CD8-positive, alpha-beta T cell (primary cell): ENCODE measurements at regions of chr19 and their contacts with region 1.

Region 1: DNA sequence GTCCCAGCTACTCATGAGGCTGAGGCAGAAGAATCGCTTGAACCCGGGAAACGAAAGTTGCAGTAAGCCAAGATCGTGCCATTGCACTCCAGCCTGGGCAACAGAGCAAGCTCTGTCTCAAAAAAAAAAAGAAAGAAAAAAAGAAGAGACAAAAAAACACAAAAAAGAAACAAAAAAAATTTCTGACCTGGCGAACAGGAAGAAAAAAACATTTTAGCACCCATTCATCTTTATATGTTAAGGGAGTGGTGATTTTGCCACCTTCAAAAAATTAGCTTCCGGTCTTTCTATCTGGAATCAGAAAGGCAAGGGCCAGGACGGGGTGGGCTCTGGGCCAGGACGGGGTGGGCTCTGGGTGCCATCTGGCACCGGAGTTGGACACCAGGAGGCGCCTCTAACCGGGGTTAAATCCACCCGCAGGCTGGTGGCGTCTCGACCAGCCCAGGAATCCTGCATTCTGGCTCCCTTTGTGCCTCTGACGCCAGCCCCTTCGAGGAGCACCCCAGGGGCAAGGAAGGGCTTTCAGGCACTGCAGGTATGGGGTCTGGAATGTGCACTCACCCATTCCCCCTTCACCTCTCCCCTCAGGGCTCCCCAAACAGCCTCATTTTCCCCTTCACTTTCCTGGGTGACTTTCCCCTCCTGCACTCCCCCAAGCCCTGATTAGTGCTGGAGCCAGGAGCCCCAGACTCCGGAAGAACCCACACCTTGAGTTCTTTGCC is 10.4 kb upstream of the ZSWIM4 start:
- DNase-seq: peak; percentile 44 to 86 (median 78)
- ATAC-seq: peak; percentile 65
- H3K4me3 ChIP-seq: no peak overlapping the region
- H3K4me3 Mint-ChIP-seq: peak overlapping the region; percentile 45
- H3K27ac ChIP-seq: no peak overlapping the region
- H3K27ac Mint-ChIP-seq: peak overlapping the region; percentile 63
- H3K4me1 ChIP-seq: peaks cover 35% of the 10 kb centered on the region
- H3K4me1 Mint-ChIP-seq: peaks cover 31% of the 10 kb centered on the region
- H3K27me3 ChIP-seq: no peaks in the 10 kb centered on the region
- H3K27me3 Mint-ChIP-seq: no peaks in the 10 kb centered on the region
- CTCF ChIP-seq: peak; percentile 73

Region 2: DNA sequence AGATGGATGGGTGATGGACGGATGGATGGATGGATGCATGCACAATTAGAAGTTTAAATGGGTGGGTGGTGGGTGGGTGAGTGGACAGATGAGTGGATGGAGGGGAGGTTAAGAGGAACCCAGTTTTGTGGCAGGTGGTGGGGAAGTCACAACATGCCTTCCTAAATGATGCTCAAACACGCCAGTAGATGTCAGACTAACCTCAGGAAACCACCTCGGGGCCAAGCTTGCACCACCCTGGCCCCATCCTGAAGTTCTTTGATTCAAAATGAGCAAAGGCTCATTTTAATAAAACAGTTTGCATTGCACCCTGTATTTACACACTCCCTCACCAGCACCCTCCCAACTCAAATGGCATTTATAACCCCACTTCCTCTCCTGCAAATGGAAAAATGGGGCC is 187.3 kb before region 1 on chr19:
- CTCF ChIA-PET with region 1: interaction called, 3 read pairs
- POLR2A ChIA-PET with region 1: no interaction called
- intact Hi-C with region 1: loop called (anchors 5 kb)
- DNase-seq: peak in 8 of 9 experiments; percentile 9 to 75 (median 34)
- ATAC-seq: peak; percentile 76
- H3K4me3 ChIP-seq: no peak overlapping the region
- H3K4me3 Mint-ChIP-seq: no peak overlapping the region
- H3K27ac ChIP-seq: no peak overlapping the region
- H3K27ac Mint-ChIP-seq: no peak overlapping the region
- H3K4me1 ChIP-seq: no peaks in the 10 kb centered on the region
- H3K4me1 Mint-ChIP-seq: no peaks in the 10 kb centered on the region
- H3K27me3 ChIP-seq: no peaks in the 10 kb centered on the region
- H3K27me3 Mint-ChIP-seq: peaks cover 24% of the 10 kb centered on the region
- CTCF ChIP-seq: peak; percentile 44

Region 3: GRCh38 chr19:13794757-13795589 is 10.1 kb after region 1 on chr19 and contains the start of gene ZSWIM4:
- CTCF ChIA-PET with region 1: interaction called, 7 read pairs
- POLR2A ChIA-PET with region 1: interaction called, 6 read pairs
- intact Hi-C with region 1: loop called in 1 of 2 experiments (anchors 1 kb)
- DNase-seq: peak; percentile 83 to 96 (median 91)
- ATAC-seq: peak; percentile 85
- H3K4me3 ChIP-seq: peak within 1 kb of the TSS; percentile 73 to 80
- H3K4me3 Mint-ChIP-seq: peak within 1 kb of the TSS; percentile 92
- H3K27ac ChIP-seq: peak within 1 kb of the TSS; percentile 51 to 77
- H3K27ac Mint-ChIP-seq: peak within 1 kb of the TSS; percentile 89
- H3K4me1 ChIP-seq: peaks cover 27% of the 10 kb centered on the region
- H3K4me1 Mint-ChIP-seq: peaks cover 38% of the 10 kb centered on the region
- H3K27me3 ChIP-seq: no peaks in the 10 kb centered on the region
- H3K27me3 Mint-ChIP-seq: no peaks in the 10 kb centered on the region
- CTCF ChIP-seq: no peak
- total RNA-seq, gene ZSWIM4: 4.1 to 5.0 TPM

Region 4: GRCh38 chr19:13806728-13807127 is 21.8 kb after region 1 on chr19:
- CTCF ChIA-PET with region 1: no interaction called
- POLR2A ChIA-PET with region 1: no interaction called
- intact Hi-C with region 1: no loop called
- DNase-seq: no peak
- ATAC-seq: no peak
- H3K4me3 ChIP-seq: no peak overlapping the region
- H3K4me3 Mint-ChIP-seq: no peak overlapping the region
- H3K27ac ChIP-seq: no peak overlapping the region
- H3K27ac Mint-ChIP-seq: no peak overlapping the region
- H3K4me1 ChIP-seq: no peaks in the 10 kb centered on the region
- H3K4me1 Mint-ChIP-seq: no peaks in the 10 kb centered on the region
- H3K27me3 ChIP-seq: no peaks in the 10 kb centered on the region
- H3K27me3 Mint-ChIP-seq: no peaks in the 10 kb centered on the region
- CTCF ChIP-seq: no peak

Region 5: DNA sequence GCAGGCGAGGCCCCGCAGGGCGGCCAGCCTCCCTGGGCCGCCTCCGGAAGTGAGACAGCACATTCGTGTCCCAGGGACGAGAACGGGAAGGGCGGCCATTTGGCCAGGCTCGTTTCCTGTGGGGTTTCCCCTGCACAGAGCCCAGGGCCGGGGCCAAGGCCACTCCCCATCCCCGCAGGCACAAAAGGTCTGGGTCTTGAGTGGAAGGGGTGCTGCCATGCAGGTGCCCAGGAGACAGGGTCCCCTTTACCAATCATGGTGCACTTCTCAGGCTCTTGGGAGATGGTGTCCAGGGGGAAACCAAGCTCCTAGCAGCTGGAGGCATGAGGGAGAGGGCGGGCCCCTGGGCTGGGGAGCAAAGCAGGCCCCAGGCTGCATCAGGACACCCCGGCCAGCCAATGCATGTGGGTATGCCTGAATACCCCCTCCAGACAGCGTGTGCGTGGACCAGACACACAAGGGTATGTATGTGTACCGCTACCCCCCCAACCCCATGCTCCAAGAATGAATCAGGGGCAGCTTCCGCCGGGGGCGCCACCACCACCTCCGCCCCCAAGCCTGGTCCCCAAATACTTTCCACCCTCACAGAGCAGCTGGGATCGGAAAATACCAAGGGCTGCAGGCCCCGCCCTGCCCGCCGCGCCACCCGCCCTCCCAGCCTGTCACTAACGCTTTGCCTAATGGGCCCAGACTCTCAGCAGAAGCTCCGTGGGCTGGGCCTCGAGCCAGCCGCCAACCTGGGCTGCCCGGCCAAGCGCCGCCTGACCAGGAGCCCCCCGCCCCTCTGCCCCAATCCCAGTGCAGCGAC is 54.4 kb after region 1 on chr19:
- CTCF ChIA-PET with region 1: interaction called, 15 read pairs
- POLR2A ChIA-PET with region 1: interaction called, 6 read pairs
- intact Hi-C with region 1: loop called in 1 of 2 experiments (anchors 1 kb)
- DNase-seq: peak in 8 of 9 experiments; percentile 64 to 89 (median 80)
- ATAC-seq: peak; percentile 45
- H3K4me3 ChIP-seq: peak overlapping the region; percentile 62 to 67
- H3K4me3 Mint-ChIP-seq: peak overlapping the region; percentile 88
- H3K27ac ChIP-seq: peak overlapping the region; percentile 78 to 96
- H3K27ac Mint-ChIP-seq: peak overlapping the region; percentile 95
- H3K4me1 ChIP-seq: peaks cover 82% of the 10 kb centered on the region
- H3K4me1 Mint-ChIP-seq: peaks cover 69% of the 10 kb centered on the region
- H3K27me3 ChIP-seq: no peaks in the 10 kb centered on the region
- H3K27me3 Mint-ChIP-seq: no peaks in the 10 kb centered on the region
- CTCF ChIP-seq: no peak

Region 6: GRCh38 chr19:14073261-14073924 is 288.5 kb after region 1 on chr19:
- CTCF ChIA-PET with region 1: interaction called, 3 read pairs
- POLR2A ChIA-PET with region 1: no interaction called
- intact Hi-C with region 1: loop called (anchors 1 to 5 kb)
- DNase-seq: peak; percentile 55 to 89 (median 76)
- ATAC-seq: peak; percentile 74
- H3K4me3 ChIP-seq: peak overlapping the region; percentile 69 to 86
- H3K4me3 Mint-ChIP-seq: peak overlapping the region; percentile 90
- H3K27ac ChIP-seq: peak overlapping the region; percentile 42 to 65
- H3K27ac Mint-ChIP-seq: peak overlapping the region; percentile 90
- H3K4me1 ChIP-seq: peaks cover 30% of the 10 kb centered on the region
- H3K4me1 Mint-ChIP-seq: peaks cover 10% of the 10 kb centered on the region
- H3K27me3 ChIP-seq: peaks cover 0 to 2% of the 10 kb centered on the region in 2 experiments
- H3K27me3 Mint-ChIP-seq: no peaks in the 10 kb centered on the region
- CTCF ChIP-seq: no peak